Sigmoid colon (tissue), 7 donors: ENCODE measurements at regions of chr15 and their contacts with region 1.

Region 1: GRCh38 chr15:94026458-94027304 is 204.7 kb upstream of the MCTP2 start:
- DNase-seq: peak; percentile 79
- H3K4me3 ChIP-seq: no peak overlapping the region
- H3K27ac ChIP-seq: peak overlapping the region; percentile 63 to 80 (median 76)
- H3K4me1 ChIP-seq: peaks cover 0 to 95% (median 78%) of the 10 kb centered on the region in 4 donors
- H3K27me3 ChIP-seq: no peaks in the 10 kb centered on the region
- CTCF ChIP-seq: no peak
- EP300 ChIP-seq: peak in 3 of 4 donors; percentile 22 to 60 (median 33)
- POLR2A ChIP-seq: no peak

Region 2: DNA sequence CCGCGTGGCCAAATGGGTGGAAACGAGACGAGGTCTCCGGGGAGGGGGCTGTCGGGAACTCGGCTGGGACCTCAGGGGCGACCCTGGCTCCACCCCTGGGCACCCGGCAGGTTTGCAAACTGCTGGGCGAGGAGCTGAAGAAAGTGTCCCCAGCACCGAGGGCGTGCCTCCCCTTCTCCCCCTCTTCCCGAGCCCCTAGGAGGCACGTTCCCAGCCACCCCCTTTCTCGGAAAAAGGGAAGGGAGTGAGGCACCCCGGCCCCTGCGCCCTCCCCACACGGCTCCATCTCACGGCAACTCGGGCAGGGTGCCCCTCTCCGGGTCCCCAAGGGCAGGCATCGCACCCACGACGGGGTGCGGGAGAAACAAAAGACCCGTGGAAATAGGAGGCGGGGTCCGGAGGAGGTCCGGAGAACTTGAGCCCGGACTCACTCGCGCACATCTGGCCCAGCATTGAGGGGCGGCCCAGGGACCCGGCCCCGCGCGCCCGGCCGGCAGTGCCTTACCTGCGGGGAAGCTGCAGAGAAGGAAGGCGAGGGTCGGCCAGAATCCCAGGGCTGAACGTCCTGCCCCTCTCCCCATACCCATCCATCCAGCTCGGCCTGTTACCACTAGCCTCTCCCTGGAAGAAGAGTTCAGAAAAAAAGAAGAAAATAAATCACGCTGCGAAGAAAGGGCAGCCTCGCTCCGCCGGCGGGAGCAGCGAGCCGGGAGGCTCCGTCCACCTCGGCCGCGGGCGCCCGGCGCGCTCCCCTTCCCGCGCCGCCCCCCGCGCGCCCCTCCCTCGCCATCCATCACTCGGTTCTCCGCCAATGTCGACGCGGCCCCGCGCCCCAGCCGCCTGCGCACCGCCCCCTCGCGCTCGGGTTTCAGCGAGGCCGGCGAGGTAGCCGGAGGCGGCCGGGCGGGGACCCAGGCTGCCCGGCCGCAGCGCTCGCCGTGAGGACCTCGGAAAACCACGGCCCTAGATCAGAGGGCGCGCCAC is 954.0 kb before region 1 on chr15:
- intact Hi-C with region 1: loop called (anchors 5 kb)
- DNase-seq: peak; percentile 94
- H3K4me3 ChIP-seq: peak overlapping the region; percentile 85 to 99 (median 88)
- H3K27ac ChIP-seq: peak overlapping the region; percentile 96 to 98 (median 97)
- H3K4me1 ChIP-seq: peaks cover 0 to 77% (median 59%) of the 10 kb centered on the region in 4 donors
- H3K27me3 ChIP-seq: no peaks in the 10 kb centered on the region
- CTCF ChIP-seq: no peak
- EP300 ChIP-seq: no peak
- POLR2A ChIP-seq: peak; percentile 33 to 41

Region 3: GRCh38 chr15:94080418-94080817 is 53.7 kb after region 1 on chr15:
- intact Hi-C with region 1: loop called (anchors 5 kb)
- DNase-seq: no peak
- H3K4me3 ChIP-seq: no peak overlapping the region
- H3K27ac ChIP-seq: peak overlapping the region in 2 of 4 donors; percentile 17 to 44
- H3K4me1 ChIP-seq: peaks cover 0 to 70% (median 48%) of the 10 kb centered on the region in 4 donors
- H3K27me3 ChIP-seq: no peaks in the 10 kb centered on the region
- CTCF ChIP-seq: no peak
- EP300 ChIP-seq: no peak
- POLR2A ChIP-seq: no peak

Region 4: GRCh38 chr15:94097552-94097951 is 70.9 kb after region 1 on chr15:
- intact Hi-C with region 1: loop called (anchors 5 kb)
- DNase-seq: no peak
- H3K4me3 ChIP-seq: no peak overlapping the region
- H3K27ac ChIP-seq: peak overlapping the region in 3 of 4 donors; percentile 64 to 87 (median 79)
- H3K4me1 ChIP-seq: peaks cover 0 to 59% (median 47%) of the 10 kb centered on the region in 4 donors
- H3K27me3 ChIP-seq: no peaks in the 10 kb centered on the region
- CTCF ChIP-seq: no peak
- EP300 ChIP-seq: no peak
- POLR2A ChIP-seq: no peak